ENCODE measurements at regions of chr19 and their contacts with region 1.

Region 1: GRCh38 chr19:35612559-35613321 is at the start of gene HAUS5:
- DNase-seq: peak; percentile 97
- ATAC-seq: peak; percentile 79
- H3K4me3 ChIP-seq: peak within 1 kb of the TSS; percentile 37 to 87 (median 78)
- H3K4me3 Mint-ChIP-seq: peak within 1 kb of the TSS; percentile 92
- H3K27ac ChIP-seq: peak within 1 kb of the TSS; percentile 76 to 77
- H3K27ac Mint-ChIP-seq: peak within 1 kb of the TSS; percentile 98
- H3K4me1 ChIP-seq: peaks cover 38 to 53% of the 10 kb centered on the region in 2 donors
- H3K4me1 Mint-ChIP-seq: peaks cover 42% of the 10 kb centered on the region
- H3K27me3 ChIP-seq: no peaks in the 10 kb centered on the region
- H3K27me3 Mint-ChIP-seq: no peaks in the 10 kb centered on the region
- CTCF ChIP-seq: no peak
- total RNA-seq, gene HAUS5: 32.2 and 35.3 TPM in 2 replicates

Region 2: GRCh38 chr19:35628565-35629331 is 16.0 kb after region 1 on chr19 and contains the start of gene RBM42:
- CTCF ChIA-PET with region 1: no interaction called
- POLR2A ChIA-PET with region 1: interaction called, 5 read pairs
- intact Hi-C with region 1: loop called (anchors 1 kb)
- DNase-seq: peak; percentile 98
- ATAC-seq: peak; percentile 99
- H3K4me3 ChIP-seq: peak within 1 kb of the TSS; percentile 81 to 98 (median 85)
- H3K4me3 Mint-ChIP-seq: peak within 1 kb of the TSS; percentile 99
- H3K27ac ChIP-seq: peak within 1 kb of the TSS; percentile 80 to 89
- H3K27ac Mint-ChIP-seq: peak within 1 kb of the TSS; percentile 99
- H3K4me1 ChIP-seq: peaks cover 8 to 17% of the 10 kb centered on the region in 2 donors
- H3K4me1 Mint-ChIP-seq: peaks cover 25% of the 10 kb centered on the region
- H3K27me3 ChIP-seq: no peaks in the 10 kb centered on the region
- H3K27me3 Mint-ChIP-seq: no peaks in the 10 kb centered on the region
- CTCF ChIP-seq: no peak
- total RNA-seq, gene RBM42: 52.0 and 52.7 TPM in 2 replicates

Region 3: GRCh38 chr19:35702223-35703012 is 89.7 kb after region 1 on chr19:
- CTCF ChIA-PET with region 1: no interaction called
- POLR2A ChIA-PET with region 1: no interaction called
- intact Hi-C with region 1: loop called (anchors 1 kb)
- DNase-seq: peak; percentile 96
- ATAC-seq: peak; percentile 99
- H3K4me3 ChIP-seq: peak overlapping the region in 4 of 5 experiments; percentile 61 to 86 (median 74)
- H3K4me3 Mint-ChIP-seq: peak overlapping the region; percentile 98
- H3K27ac ChIP-seq: peak overlapping the region; percentile 59 to 74
- H3K27ac Mint-ChIP-seq: peak overlapping the region; percentile 98
- H3K4me1 ChIP-seq: peaks cover 0 to 19% of the 10 kb centered on the region in 2 donors
- H3K4me1 Mint-ChIP-seq: peaks cover 8% of the 10 kb centered on the region
- H3K27me3 ChIP-seq: no peaks in the 10 kb centered on the region
- H3K27me3 Mint-ChIP-seq: no peaks in the 10 kb centered on the region
- CTCF ChIP-seq: no peak